GM12878 (cell line): ENCODE measurements at regions of chr11 and their contacts with region 1.

Region 1: DNA sequence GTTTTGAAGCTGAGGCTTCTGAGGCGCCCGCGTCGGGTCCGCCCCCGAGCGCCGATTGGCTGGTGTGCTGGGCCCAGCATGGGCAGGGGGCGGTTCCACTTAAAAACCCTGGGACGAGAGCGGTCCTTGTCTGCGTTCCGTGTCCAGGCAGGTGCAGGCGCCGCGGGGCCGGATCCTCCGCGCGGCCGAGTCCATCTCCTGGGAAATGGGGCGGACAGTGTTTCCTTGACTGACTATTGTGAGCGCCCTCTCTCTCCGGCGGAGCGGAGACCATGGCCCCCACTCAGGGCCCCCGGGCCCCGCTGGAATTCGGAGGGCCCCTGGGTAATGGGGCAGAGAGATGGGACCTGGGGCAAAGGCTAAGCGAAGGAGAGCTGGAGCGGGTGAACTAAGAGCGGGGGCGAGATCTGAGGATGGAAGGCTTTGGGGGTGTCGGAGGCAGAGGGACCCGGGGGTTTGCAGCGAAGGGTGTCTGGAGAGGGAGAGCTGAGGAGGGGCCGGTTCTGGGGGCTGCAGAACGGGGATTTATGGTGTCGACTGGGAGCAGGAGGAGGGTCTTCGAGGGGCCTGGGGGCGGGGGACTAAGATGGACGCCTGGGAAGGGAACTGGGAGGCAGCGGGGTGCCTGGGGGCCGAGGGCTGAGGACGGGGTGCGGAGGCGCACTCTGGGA is at the start of gene TM7SF2:
- DNase-seq: no peak
- ATAC-seq: peak; percentile 89
- H3K4me3 ChIP-seq: peak within 1 kb of the TSS; percentile 85
- H3K27ac ChIP-seq: peak within 1 kb of the TSS; percentile 14
- H3K4me1 ChIP-seq: peaks cover 24% of the 10 kb centered on the region
- H3K27me3 ChIP-seq: no peaks in the 10 kb centered on the region
- CTCF ChIP-seq: no peak
- EP300 ChIP-seq: no peak
- POLR2A ChIP-seq: peak; percentile 97
- RAD21 ChIP-seq: no peak
- polyA plus RNA-seq, gene TM7SF2: 0.52 to 2.9 TPM

Region 2: GRCh38 chr11:64883575-64883974 is 228.3 kb before region 1 on chr11:
- CTCF ChIA-PET with region 1: no interaction called
- POLR2A ChIA-PET with region 1: no interaction called
- RAD21 ChIA-PET with region 1: no interaction called
- SMC1A ChIA-PET with region 1: no interaction called
- in situ Hi-C with region 1: no loop called
- intact Hi-C with region 1: no loop called
- DNase-seq: no peak
- ATAC-seq: no peak
- H3K4me3 ChIP-seq: no peak overlapping the region
- H3K27ac ChIP-seq: no peak overlapping the region
- H3K4me1 ChIP-seq: peaks cover 32% of the 10 kb centered on the region
- H3K27me3 ChIP-seq: no peaks in the 10 kb centered on the region
- CTCF ChIP-seq: no peak
- EP300 ChIP-seq: no peak
- POLR2A ChIP-seq: no peak
- RAD21 ChIP-seq: no peak

Region 3: GRCh38 chr11:64916775-64917662 is 194.9 kb before region 1 on chr11 and contains the start of gene ATG2A:
- CTCF ChIA-PET with region 1: no interaction called
- POLR2A ChIA-PET with region 1: no interaction called
- RAD21 ChIA-PET with region 1: no interaction called
- SMC1A ChIA-PET with region 1: no interaction called
- in situ Hi-C with region 1: no loop called
- intact Hi-C with region 1: loop called (anchors 5 kb)
- DNase-seq: peak; percentile 99
- ATAC-seq: peak; percentile 98
- H3K4me3 ChIP-seq: peak within 1 kb of the TSS; percentile 86
- H3K27ac ChIP-seq: peak within 1 kb of the TSS; percentile 91
- H3K4me1 ChIP-seq: peaks cover 6% of the 10 kb centered on the region
- H3K27me3 ChIP-seq: no peaks in the 10 kb centered on the region
- CTCF ChIP-seq: no peak
- EP300 ChIP-seq: no peak
- POLR2A ChIP-seq: peak; percentile 86
- RAD21 ChIP-seq: no peak
- polyA plus RNA-seq, gene ATG2A: 0.08 to 0.51 TPM

Region 4: GRCh38 chr11:65083834-65084597 is 27.9 kb before region 1 on chr11 and contains the starts of genes CDCA5 and ZFPL1:
- CTCF ChIA-PET with region 1: interaction called, 11 read pairs
- POLR2A ChIA-PET with region 1: no interaction called
- RAD21 ChIA-PET with region 1: interaction called, 3 read pairs
- SMC1A ChIA-PET with region 1: interaction called, 3 read pairs
- in situ Hi-C with region 1: no loop called
- intact Hi-C with region 1: no loop called
- DNase-seq: peak; percentile 75
- ATAC-seq: peak; percentile 82
- H3K4me3 ChIP-seq: peak within 1 kb of the TSS; percentile 86
- H3K27ac ChIP-seq: peak within 1 kb of the TSS; percentile 84
- H3K4me1 ChIP-seq: peaks cover 24% of the 10 kb centered on the region
- H3K27me3 ChIP-seq: no peaks in the 10 kb centered on the region
- CTCF ChIP-seq: no peak
- EP300 ChIP-seq: peak in 1 of 2 experiments; percentile 22; a peak in 1 of 4 replicates
- POLR2A ChIP-seq: peak; percentile 97
- RAD21 ChIP-seq: no peak
- polyA plus RNA-seq, gene CDCA5: 21.2 to 34.3 TPM
- polyA plus RNA-seq, gene ZFPL1: 2.2 to 5.6 TPM

Region 5: GRCh38 chr11:65095974-65096806 is 15.7 kb before region 1 on chr11 and contains the start of gene VPS51:
- CTCF ChIA-PET with region 1: interaction called, 76 read pairs
- POLR2A ChIA-PET with region 1: interaction called, 11 read pairs
- RAD21 ChIA-PET with region 1: interaction called, 4 read pairs
- SMC1A ChIA-PET with region 1: interaction called, 18 read pairs
- in situ Hi-C with region 1: no loop called
- intact Hi-C with region 1: no loop called
- DNase-seq: peak; percentile 51
- ATAC-seq: peak; percentile 99
- H3K4me3 ChIP-seq: peak within 1 kb of the TSS; percentile 96
- H3K27ac ChIP-seq: peak within 1 kb of the TSS; percentile 45
- H3K4me1 ChIP-seq: peaks cover 4% of the 10 kb centered on the region
- H3K27me3 ChIP-seq: no peaks in the 10 kb centered on the region
- CTCF ChIP-seq: no peak
- EP300 ChIP-seq: 0 out of 4 replicates have a peak, but pooled peaks of 1 of the 2 experiments have one; percentile 19
- POLR2A ChIP-seq: peak; percentile 99
- RAD21 ChIP-seq: peak; percentile 11; the same call in 1 of the 2 replicates
- polyA plus RNA-seq, gene VPS51: 1.5 to 8.6 TPM

Region 6: DNA sequence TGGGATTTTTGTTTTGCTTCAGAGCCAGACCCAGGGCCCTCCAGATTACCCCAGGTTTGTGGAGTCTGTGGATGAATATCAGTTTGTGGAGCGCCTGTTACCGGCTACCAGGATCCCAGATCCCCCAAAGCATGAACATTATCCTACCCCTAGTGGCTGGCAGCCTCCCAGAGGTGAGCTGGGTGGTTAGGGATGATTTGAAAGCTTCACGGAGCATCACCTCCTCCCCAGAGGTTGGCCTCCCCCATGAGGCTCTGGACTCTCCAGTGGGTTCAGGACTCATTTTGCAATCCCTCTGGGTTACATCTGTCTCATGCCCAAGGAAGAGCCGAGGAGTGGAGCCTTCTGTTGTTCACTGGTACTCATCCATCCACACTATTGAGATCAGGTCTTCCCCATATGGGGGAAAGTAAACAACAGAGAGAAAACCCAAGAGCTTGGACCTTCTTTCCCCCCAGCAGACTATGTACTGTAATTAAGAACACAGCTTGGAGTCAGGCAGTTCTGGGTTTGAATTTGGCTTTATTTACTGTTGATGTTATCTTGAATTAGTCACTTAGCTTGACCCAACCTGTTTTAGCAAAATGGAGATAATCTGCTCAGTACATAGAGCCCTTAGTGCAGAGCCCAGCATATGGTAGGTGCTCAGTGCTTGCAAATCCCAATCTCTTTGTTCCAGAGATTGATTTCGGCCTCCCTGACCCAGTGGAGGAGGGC is 12.8 kb after region 1 on chr11:
- CTCF ChIA-PET with region 1: interaction called, 22 read pairs
- POLR2A ChIA-PET with region 1: interaction called, 31 read pairs
- RAD21 ChIA-PET with region 1: interaction called, 18 read pairs
- SMC1A ChIA-PET with region 1: interaction called, 15 read pairs
- in situ Hi-C with region 1: no loop called
- intact Hi-C with region 1: no loop called
- DNase-seq: no peak
- ATAC-seq: no peak
- H3K4me3 ChIP-seq: no peak overlapping the region
- H3K27ac ChIP-seq: no peak overlapping the region
- H3K4me1 ChIP-seq: peaks cover 15% of the 10 kb centered on the region
- H3K27me3 ChIP-seq: no peaks in the 10 kb centered on the region
- CTCF ChIP-seq: no peak
- EP300 ChIP-seq: no peak
- POLR2A ChIP-seq: no peak
- RAD21 ChIP-seq: no peak

Region 7: DNA sequence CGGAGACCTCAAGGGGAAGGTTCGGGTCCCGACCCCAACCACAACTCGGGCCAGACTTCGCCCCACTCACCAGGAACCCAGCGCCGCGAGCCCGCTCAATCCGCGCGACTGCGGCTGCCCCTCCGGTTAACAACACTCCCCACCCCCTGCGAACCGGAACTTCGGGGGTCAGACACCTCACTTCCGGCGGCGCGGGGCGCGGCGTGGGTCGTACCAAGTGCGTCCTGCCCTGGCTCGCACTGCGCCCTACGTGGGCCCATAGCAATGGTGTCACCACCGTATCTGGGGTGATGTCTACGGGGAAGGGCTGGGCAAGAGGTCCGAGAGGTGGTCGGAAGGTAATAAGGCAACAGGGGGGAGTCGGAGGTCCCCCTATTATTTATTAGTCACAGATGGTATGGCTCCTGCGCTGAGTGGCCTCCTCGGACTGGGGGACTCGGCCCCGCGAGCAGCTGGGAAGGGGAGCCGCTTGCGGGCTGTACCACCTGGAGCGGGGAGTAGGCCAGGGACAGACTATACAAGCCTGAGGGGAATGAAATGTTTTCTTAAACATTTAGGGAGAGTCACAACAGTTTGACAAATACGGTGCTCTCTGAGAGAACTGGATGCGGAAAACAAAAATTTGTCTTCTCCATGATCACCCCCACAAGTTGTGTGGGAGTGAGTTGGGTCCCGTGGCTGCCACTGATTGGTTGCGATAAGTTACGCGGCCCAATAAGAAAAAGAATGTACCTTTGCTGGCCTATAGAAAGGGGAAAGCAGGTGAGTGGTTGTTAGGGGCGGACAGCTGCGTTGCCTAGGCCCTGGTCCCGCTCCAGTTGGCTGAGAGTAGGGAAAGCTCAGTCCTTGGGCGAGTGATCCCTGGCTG is 22.7 kb after region 1 on chr11 and contains the start of gene SYVN1:
- CTCF ChIA-PET with region 1: interaction called, 29 read pairs
- POLR2A ChIA-PET with region 1: interaction called, 8 read pairs
- RAD21 ChIA-PET with region 1: interaction called, 6 read pairs
- SMC1A ChIA-PET with region 1: no interaction called
- in situ Hi-C with region 1: no loop called
- intact Hi-C with region 1: no loop called
- DNase-seq: peak; percentile 89
- ATAC-seq: peak; percentile 91
- H3K4me3 ChIP-seq: peak within 1 kb of the TSS; percentile 99
- H3K27ac ChIP-seq: peak within 1 kb of the TSS; percentile 99
- H3K4me1 ChIP-seq: peaks cover 21% of the 10 kb centered on the region
- H3K27me3 ChIP-seq: no peaks in the 10 kb centered on the region
- CTCF ChIP-seq: 0 out of 6 replicates have a peak, but pooled peaks of 1 of the 3 experiments have one; percentile 1
- EP300 ChIP-seq: 0 out of 4 replicates have a peak, but pooled peaks of 1 of the 2 experiments have one; percentile 35
- POLR2A ChIP-seq: peak; percentile 97
- RAD21 ChIP-seq: no peak
- polyA plus RNA-seq, gene SYVN1: 0.79 to 2.6 TPM

Region 8: GRCh38 chr11:65159012-65159411 is 47.1 kb after region 1 on chr11:
- CTCF ChIA-PET with region 1: no interaction called
- POLR2A ChIA-PET with region 1: no interaction called
- RAD21 ChIA-PET with region 1: no interaction called
- SMC1A ChIA-PET with region 1: no interaction called
- in situ Hi-C with region 1: no loop called
- intact Hi-C with region 1: no loop called
- DNase-seq: peak; percentile 61
- ATAC-seq: peak; percentile 99
- H3K4me3 ChIP-seq: no peak overlapping the region
- H3K27ac ChIP-seq: peak overlapping the region; percentile 17; the same call in 1 of the 2 replicates
- H3K4me1 ChIP-seq: peaks cover 13% of the 10 kb centered on the region
- H3K27me3 ChIP-seq: no peaks in the 10 kb centered on the region
- CTCF ChIP-seq: no peak
- EP300 ChIP-seq: peak; percentile 38 to 71; a peak in 2 of 4 replicates
- POLR2A ChIP-seq: no peak
- RAD21 ChIP-seq: no peak

Region 9: DNA sequence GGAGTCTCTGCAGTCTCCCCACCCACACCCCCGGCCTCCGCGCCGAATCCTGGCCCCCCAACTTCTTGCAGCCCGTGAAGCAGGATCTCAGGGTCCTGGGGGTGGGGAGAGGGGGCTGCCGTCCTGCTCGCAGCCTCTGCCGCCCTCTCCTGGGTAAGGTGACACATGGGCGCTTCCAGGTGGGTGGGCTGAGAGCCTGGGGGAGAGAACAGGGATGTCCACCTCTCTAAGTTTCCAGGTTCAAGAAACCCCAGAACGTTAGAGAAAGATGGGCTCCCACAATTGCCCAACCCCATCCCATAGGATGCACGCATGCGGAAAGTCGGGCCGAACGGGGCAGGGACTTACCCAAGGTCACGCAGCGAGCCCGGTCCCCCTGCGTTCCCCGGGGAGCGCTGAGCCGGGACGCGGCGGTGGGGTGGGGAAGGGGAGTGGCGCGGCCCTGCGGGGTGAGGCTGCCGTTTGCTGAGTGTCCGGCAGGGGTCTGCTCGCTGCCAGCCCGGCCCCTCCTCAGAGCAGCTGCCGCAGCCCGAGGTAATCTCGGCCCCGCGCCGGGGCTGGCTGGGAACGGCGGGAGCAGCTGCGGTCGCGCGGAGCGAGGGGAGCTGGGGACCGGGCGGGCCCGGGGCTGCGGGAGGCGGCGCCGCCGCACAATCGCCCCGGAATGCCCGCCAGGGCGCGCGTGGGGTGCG is 69.1 kb after region 1 on chr11:
- CTCF ChIA-PET with region 1: interaction called, 93 read pairs
- POLR2A ChIA-PET with region 1: interaction called, 8 read pairs
- RAD21 ChIA-PET with region 1: interaction called, 59 read pairs
- SMC1A ChIA-PET with region 1: interaction called, 27 read pairs
- in situ Hi-C with region 1: no loop called
- intact Hi-C with region 1: loop called (anchors 5 kb)
- DNase-seq: peak; percentile 19
- ATAC-seq: peak; percentile 88
- H3K4me3 ChIP-seq: peak overlapping the region; percentile 100
- H3K27ac ChIP-seq: peak overlapping the region; percentile 93
- H3K4me1 ChIP-seq: peaks cover 6% of the 10 kb centered on the region; the same call in 1 of the 2 replicates
- H3K27me3 ChIP-seq: no peaks in the 10 kb centered on the region
- CTCF ChIP-seq: peak; percentile 66 to 83 (median 72)
- EP300 ChIP-seq: no peak
- POLR2A ChIP-seq: no peak
- RAD21 ChIP-seq: peak; percentile 87

Region 10: DNA sequence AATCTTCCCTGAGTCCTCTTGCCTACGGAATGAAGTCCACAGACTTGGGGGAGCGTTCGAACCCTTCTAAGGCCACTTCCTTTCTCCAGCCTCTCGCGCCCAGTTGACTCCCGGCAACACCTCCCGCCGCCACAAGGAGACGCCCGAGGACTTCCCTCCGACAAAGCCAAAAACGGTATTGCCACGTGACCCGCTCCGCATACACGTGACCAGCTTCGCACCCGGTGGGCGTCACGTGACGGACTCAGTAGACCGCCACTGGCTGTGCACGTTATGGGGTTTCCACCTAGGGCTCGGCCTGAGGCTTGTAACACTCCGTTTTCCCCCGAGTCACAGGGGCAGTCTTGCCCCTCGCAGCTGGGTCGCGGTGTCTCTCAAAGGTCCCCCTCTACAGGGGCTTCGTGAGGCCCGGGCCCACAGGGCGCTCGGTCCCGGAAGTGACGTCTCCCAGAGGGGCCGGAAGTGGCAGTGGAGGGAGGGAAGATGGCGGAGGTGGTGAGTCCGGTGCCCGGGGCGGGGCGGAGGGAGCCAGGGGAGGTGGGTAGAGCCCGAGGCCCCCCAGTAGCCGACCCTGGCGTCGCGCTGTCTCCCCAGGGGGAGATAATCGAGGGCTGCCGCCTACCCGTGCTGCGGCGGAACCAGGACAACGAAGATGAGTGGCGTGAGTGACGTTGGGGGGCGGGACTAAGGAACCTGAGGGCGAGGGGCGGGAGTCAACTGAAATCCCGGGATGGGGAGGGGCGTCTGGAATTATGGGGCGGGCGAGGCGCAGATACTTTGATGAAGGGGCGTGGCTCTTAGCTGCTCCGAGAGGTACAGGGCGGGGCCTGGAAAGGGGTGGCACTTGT is 600.1 kb after region 1 on chr11 and contains the start of gene KAT5:
- CTCF ChIA-PET with region 1: no interaction called
- POLR2A ChIA-PET with region 1: no interaction called
- RAD21 ChIA-PET with region 1: no interaction called
- SMC1A ChIA-PET with region 1: no interaction called
- in situ Hi-C with region 1: no loop called
- intact Hi-C with region 1: no loop called
- DNase-seq: peak; percentile 94
- ATAC-seq: peak; percentile 89
- H3K4me3 ChIP-seq: peak within 1 kb of the TSS; percentile 85
- H3K27ac ChIP-seq: peak within 1 kb of the TSS; percentile 99
- H3K4me1 ChIP-seq: peaks cover 8% of the 10 kb centered on the region
- H3K27me3 ChIP-seq: no peaks in the 10 kb centered on the region
- CTCF ChIP-seq: peak; percentile 99 to 100 (median 100); a peak in 5 of 6 replicates
- EP300 ChIP-seq: peak in 1 of 2 experiments; percentile 16; a peak in 1 of 4 replicates
- POLR2A ChIP-seq: peak; percentile 92
- RAD21 ChIP-seq: peak; percentile 90
- polyA plus RNA-seq, gene KAT5: 3.4 to 10.2 TPM